PC-9 (cell line): ENCODE measurements at regions of chr1 and their contacts with region 1.

Region 1: DNA sequence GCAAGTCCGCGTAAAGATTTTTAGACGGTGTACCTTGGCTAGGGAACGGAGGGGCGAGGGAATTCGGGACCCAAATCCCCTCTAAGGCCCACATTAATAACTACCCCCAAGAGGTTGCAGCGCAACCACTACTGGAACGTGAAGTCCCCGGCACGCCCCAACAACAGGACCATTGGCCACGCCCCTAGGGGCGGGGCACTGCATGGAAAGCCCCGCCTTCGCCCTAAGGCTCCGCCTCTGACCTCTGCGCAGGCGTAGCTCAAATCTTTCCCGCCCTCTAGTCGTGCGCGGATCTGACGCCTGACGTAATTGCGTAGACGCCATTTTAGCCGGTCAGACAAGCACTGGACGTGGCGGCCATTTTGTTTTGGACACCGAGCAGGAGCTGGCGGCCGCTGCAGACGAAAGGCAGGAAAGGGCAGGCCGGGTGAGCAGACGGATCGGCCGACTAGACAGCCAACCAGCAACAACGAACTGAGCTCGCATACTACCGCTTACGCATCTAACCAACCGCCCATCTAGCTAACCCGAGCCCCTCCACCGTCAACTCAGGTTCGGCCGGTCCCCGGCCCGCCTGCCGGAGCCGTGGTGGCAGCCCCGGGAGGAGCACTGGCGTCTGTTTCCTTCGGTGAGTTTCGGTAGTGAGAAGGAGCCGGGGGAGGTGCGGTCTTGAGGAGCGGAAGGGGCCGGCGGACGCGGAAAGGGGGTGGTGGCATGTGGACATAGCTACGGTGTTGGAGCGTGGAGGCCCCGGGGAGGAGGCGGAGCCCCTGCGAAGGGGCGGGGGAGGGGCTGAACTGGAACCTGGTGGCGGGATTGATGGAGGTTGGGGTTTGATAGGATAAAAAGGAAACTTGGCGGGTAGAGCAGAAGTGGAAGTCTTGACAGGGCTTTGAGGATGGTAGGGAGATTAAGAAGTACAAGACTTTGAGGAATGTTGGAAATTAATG is at the start of gene CHTOP:
- DNase-seq: peak; percentile 92 to 98
- H3K4me3 ChIP-seq: peak within 1 kb of the TSS; percentile 96
- H3K27ac ChIP-seq: peak within 1 kb of the TSS; percentile 100
- H3K4me1 ChIP-seq: peaks cover 20% of the 10 kb centered on the region
- H3K27me3 ChIP-seq: no peaks in the 10 kb centered on the region
- CTCF ChIP-seq: no peak
- total RNA-seq, gene CHTOP: 75.1 and 83.9 TPM in 2 replicates

Region 2: GRCh38 chr1:153545067-153546055 is 88.6 kb before region 1 on chr1 and contains the start of gene S100A4:
- CTCF ChIA-PET with region 1: no interaction called
- POLR2A ChIA-PET with region 1: interaction called, 11 read pairs
- intact Hi-C with region 1: no loop called
- DNase-seq: peak; percentile 91 to 98
- H3K4me3 ChIP-seq: peak within 1 kb of the TSS; percentile 61
- H3K27ac ChIP-seq: peak within 1 kb of the TSS; percentile 67
- H3K4me1 ChIP-seq: peaks cover 91% of the 10 kb centered on the region
- H3K27me3 ChIP-seq: no peaks in the 10 kb centered on the region
- CTCF ChIP-seq: no peak
- total RNA-seq, gene S100A4: 303 and 346 TPM in 2 replicates

Region 3: DNA sequence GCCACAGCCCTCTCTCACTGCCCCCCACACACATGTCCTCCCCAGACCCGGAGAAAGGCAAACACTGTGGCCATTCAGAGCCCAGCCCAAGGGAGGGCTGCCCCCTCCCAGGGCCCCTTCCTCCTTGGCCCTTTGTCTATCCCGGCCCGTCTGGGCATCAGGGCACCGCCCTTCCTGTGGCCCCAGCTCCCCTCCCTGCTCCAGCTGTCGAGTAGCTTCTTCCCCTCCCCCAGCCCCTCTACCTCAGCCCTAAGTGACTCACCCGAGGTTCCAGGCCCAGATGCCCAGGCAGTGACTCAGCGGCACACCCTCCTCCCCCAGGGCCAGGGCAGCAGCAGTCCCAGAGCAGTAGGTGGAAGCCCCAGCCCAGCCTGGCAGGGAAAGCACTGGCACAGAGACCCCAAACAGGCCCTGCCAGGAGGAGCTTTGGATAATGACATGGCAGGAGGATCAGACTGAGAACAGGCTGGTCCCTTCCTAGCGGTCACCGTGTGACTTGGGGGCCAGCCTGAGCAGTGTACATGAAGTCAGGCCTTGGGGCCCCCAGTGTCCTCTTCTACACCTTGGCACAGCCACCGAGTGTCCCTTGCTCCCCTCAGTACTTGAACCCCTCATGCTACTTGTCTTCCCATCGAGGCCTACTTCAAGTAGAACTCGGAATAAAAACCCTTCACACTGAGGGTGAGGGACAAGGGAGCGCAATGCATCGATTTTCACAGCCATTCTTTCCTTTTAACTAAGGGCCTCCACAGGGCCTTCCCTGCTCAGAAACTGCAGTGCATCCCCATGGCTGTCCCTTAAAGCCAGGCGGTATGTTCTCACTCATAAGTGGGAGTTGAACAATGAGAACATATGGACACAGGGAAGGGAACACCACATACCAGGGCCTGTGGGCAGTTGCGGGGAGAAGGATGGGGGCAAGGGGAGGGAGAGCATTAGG is 67.3 kb before region 1 on chr1:
- CTCF ChIA-PET with region 1: interaction called, 3 read pairs
- POLR2A ChIA-PET with region 1: interaction called, 13 read pairs
- intact Hi-C with region 1: loop called (anchors 1 kb)
- DNase-seq: peak; percentile 96 to 98
- H3K4me3 ChIP-seq: peak overlapping the region; percentile 34; the same call in 1 of the 2 replicates
- H3K27ac ChIP-seq: peak overlapping the region; percentile 97
- H3K4me1 ChIP-seq: peaks cover 56% of the 10 kb centered on the region
- H3K27me3 ChIP-seq: no peaks in the 10 kb centered on the region
- CTCF ChIP-seq: no peak

Region 4: GRCh38 chr1:153608742-153609584 is 25.0 kb before region 1 on chr1:
- CTCF ChIA-PET with region 1: interaction called, 5 read pairs
- POLR2A ChIA-PET with region 1: interaction called, 48 read pairs
- intact Hi-C with region 1: loop called (anchors 1 kb)
- DNase-seq: peak; percentile 94 to 98
- H3K4me3 ChIP-seq: peak overlapping the region; percentile 56
- H3K27ac ChIP-seq: peak overlapping the region; percentile 96
- H3K4me1 ChIP-seq: peaks cover 52% of the 10 kb centered on the region
- H3K27me3 ChIP-seq: no peaks in the 10 kb centered on the region
- CTCF ChIP-seq: no peak; the same call in 1 of the 2 replicates

Region 5: GRCh38 chr1:153616144-153616916 is 17.7 kb before region 1 on chr1 and contains the start of gene S100A14:
- CTCF ChIA-PET with region 1: interaction called, 5 read pairs
- POLR2A ChIA-PET with region 1: interaction called, 48 read pairs
- intact Hi-C with region 1: loop called (anchors 1 kb)
- DNase-seq: peak; percentile 73 to 89
- H3K4me3 ChIP-seq: peak within 1 kb of the TSS; percentile 66
- H3K27ac ChIP-seq: peak within 1 kb of the TSS; percentile 56
- H3K4me1 ChIP-seq: peaks cover 44% of the 10 kb centered on the region
- H3K27me3 ChIP-seq: no peaks in the 10 kb centered on the region
- CTCF ChIP-seq: no peak
- total RNA-seq, gene S100A14: 411 and 486 TPM in 2 replicates

Region 6: GRCh38 chr1:153705485-153705884 is 71.5 kb after region 1 on chr1:
- CTCF ChIA-PET with region 1: no interaction called
- POLR2A ChIA-PET with region 1: interaction called, 16 read pairs
- intact Hi-C with region 1: no loop called
- DNase-seq: no peak
- H3K4me3 ChIP-seq: no peak overlapping the region
- H3K27ac ChIP-seq: no peak overlapping the region
- H3K4me1 ChIP-seq: peaks cover 29% of the 10 kb centered on the region
- H3K27me3 ChIP-seq: no peaks in the 10 kb centered on the region
- CTCF ChIP-seq: no peak

Region 7: DNA sequence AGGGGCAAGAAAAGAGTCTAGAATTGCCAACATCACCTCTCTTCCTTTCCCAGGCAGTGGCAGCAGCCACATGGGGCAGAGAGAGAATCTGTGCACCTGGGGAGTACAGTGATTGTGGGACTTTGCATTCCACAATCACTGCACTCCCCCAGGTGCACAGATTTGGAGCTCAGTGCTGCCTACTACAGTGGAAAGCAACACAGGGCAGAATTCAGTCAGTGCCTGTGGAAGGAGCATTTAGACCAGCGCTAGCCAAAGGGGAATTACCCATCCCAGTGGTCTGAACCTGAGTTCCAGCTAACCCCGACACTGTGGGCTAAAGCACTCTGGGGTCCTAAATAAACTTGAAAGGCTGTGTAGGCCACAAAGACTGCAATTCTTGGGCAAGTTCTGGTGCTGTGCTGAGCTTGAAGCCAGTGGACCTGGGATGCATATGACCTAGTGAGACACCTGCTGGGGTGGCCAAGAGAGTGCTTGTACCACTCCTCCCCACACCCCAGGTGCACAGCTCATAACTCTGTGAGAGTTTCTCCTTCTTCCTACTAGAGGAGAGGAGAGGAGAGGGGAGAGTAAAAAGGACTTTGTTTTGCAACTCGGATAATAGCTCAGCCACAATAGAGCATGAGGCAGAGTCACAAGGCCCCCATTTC is 470.6 kb after region 1 on chr1:
- CTCF ChIA-PET with region 1: no interaction called
- POLR2A ChIA-PET with region 1: no interaction called
- intact Hi-C with region 1: no loop called
- DNase-seq: no peak
- H3K4me3 ChIP-seq: no peak overlapping the region
- H3K27ac ChIP-seq: no peak overlapping the region
- H3K4me1 ChIP-seq: no peaks in the 10 kb centered on the region
- H3K27me3 ChIP-seq: no peaks in the 10 kb centered on the region
- CTCF ChIP-seq: no peak